Activated CD4-positive, alpha-beta memory T cell treated with anti-CD3 and anti-CD28 coated beads, Interleukin-2, amount 10 ng/mL, durations not matched to agents 7 days and 5 days (primary cell): ENCODE measurements at regions of chr17 and their contacts with region 1.

Region 1: DNA sequence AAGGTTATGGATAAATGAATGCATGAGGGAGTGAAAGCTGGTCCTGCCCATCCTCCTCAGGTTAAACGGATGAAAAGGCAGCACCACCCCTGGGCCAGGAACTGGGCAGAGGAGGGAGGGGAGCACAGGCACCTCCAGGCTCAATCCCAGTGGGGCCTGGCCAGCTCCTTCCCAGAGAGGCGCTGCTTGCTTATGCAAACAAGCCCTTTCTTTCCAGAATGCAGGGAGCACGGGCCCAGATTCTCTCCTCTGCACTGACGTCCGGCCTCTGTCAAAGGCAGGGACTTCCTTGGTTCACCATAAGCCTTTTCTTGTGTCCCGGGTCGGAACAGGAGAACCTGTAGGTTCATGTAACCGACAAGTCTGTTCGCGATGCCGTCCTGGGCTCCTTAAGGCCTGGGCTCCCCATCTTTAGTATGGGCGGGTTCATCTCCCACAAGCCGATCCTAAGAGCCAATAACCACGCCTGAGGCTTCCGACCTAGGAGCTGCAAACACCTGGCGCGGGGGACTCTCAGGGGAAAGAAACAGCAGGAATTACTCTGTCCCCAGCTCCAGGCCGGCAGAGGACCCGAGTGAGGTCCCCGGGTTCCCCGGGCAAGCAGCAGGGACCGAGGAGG is 16.3 kb downstream of the ENPP7 start:
- DNase-seq: no peak
- H3K4me3 Mint-ChIP-seq: no peak overlapping the region
- H3K27ac Mint-ChIP-seq: no peak overlapping the region
- H3K4me1 Mint-ChIP-seq: peaks cover 8% of the 10 kb centered on the region
- H3K27me3 Mint-ChIP-seq: peaks cover 54% of the 10 kb centered on the region

Region 2: GRCh38 chr17:79702550-79703236 is 44.3 kb before region 1 on chr17:
- CTCF ChIA-PET with region 1: no interaction called
- POLR2A ChIA-PET with region 1: no interaction called
- DNase-seq: no peak
- H3K4me3 Mint-ChIP-seq: no peak overlapping the region
- H3K27ac Mint-ChIP-seq: no peak overlapping the region
- H3K4me1 Mint-ChIP-seq: no peaks in the 10 kb centered on the region
- H3K27me3 Mint-ChIP-seq: no peaks in the 10 kb centered on the region

Region 3: GRCh38 chr17:79728226-79728907 is 18.6 kb before region 1 on chr17:
- CTCF ChIA-PET with region 1: interaction called, 15 read pairs
- POLR2A ChIA-PET with region 1: interaction called, 3 read pairs
- DNase-seq: peak; percentile 91
- H3K4me3 Mint-ChIP-seq: peak overlapping the region; percentile 32
- H3K27ac Mint-ChIP-seq: peak overlapping the region; percentile 68
- H3K4me1 Mint-ChIP-seq: peaks cover 24% of the 10 kb centered on the region
- H3K27me3 Mint-ChIP-seq: no peaks in the 10 kb centered on the region

Region 4: GRCh38 chr17:79796763-79797491 is 49.9 kb after region 1 on chr17 and contains the start of gene CBX8:
- CTCF ChIA-PET with region 1: interaction called, 11 read pairs
- POLR2A ChIA-PET with region 1: interaction called, 3 read pairs
- DNase-seq: peak; percentile 100
- H3K4me3 Mint-ChIP-seq: peak within 1 kb of the TSS; percentile 83
- H3K27ac Mint-ChIP-seq: peak within 1 kb of the TSS; percentile 70
- H3K4me1 Mint-ChIP-seq: peaks cover 33% of the 10 kb centered on the region
- H3K27me3 Mint-ChIP-seq: peaks cover 44% of the 10 kb centered on the region
- total RNA-seq, gene CBX8: 5.7 to 6.7 TPM